A673 (cell line): ENCODE measurements at regions of chr1 and their contacts with region 1.

Region 1: GRCh38 chr1:220776720-220777326 is 9.9 kb upstream of the MTARC1 start:
- DNase-seq: peak; percentile 78
- H3K4me3 ChIP-seq: no peak overlapping the region
- H3K27ac ChIP-seq: no peak overlapping the region
- H3K4me1 ChIP-seq: no peaks in the 10 kb centered on the region
- H3K27me3 ChIP-seq: no peaks in the 10 kb centered on the region
- CTCF ChIP-seq: peak; percentile 97

Region 2: DNA sequence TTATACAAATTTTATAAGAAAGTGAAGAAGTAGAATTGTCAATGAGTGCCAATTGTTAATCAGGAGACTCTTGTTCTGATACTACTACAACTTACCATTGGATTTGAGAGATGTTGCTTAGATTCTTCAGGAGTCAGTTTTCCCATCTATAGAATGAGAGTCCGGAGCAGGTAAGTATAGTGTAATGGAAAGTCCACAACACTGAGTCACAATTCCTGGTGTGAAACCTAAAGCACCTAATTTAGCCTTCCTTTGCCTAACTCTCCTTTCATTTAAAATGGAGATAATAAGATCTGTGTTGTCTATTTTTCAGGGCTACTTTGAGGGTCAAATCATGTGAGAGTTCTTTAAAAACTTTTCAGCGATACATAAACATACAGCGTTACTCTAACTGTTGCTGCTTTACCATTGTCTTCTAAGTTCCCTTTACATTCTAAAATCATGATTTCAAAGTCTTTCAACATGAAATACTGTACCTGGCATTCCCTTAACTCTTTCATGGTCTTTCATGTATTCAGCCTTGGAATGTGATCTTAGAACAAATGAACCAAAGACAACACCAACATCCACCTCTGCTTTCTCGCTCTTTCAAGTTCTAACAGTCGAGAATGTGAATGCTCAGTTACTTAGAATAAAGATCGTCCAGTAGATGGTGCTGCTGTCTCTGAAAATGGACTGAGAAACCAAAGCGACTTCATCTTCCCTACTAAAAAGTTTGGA is 939.4 kb before region 1 on chr1:
- CTCF ChIA-PET with region 1: no interaction called
- POLR2A ChIA-PET with region 1: no interaction called
- intact Hi-C with region 1: loop called (anchors 5 kb)
- DNase-seq: peak; percentile 65
- H3K4me3 ChIP-seq: no peak overlapping the region
- H3K27ac ChIP-seq: no peak overlapping the region
- H3K4me1 ChIP-seq: no peaks in the 10 kb centered on the region
- H3K27me3 ChIP-seq: peaks cover 17% of the 10 kb centered on the region
- CTCF ChIP-seq: peak; percentile 72

Region 3: DNA sequence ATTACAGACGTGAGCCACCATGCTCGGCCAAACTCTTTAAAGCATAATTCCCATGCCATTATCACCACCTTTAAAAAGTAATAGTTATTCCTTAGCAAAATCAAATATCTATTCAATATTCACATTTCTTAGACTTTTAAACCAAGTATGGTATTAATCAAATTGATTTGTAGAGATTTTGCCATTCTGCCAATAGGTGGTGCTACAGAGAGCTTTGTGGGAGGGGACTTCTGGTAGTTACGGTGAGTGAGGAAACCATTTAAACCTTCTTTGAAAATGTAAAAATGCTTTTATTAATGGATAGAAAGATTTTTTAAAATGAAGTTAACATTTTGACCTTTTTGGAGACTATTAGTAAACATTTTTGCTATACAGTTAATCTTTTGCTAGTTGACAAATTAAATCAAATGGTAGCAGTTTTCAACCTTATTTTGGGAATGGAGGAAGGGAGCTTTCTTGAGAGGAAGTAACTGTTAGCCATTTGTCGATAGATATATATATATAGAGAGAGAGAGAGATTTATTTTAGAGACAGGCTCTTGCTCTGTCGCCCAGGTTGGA is 663.6 kb before region 1 on chr1:
- CTCF ChIA-PET with region 1: interaction called, 3 read pairs
- POLR2A ChIA-PET with region 1: no interaction called
- intact Hi-C with region 1: loop called (anchors 10 kb)
- DNase-seq: peak; percentile 73
- H3K4me3 ChIP-seq: no peak overlapping the region
- H3K27ac ChIP-seq: no peak overlapping the region
- H3K4me1 ChIP-seq: no peaks in the 10 kb centered on the region
- H3K27me3 ChIP-seq: no peaks in the 10 kb centered on the region
- CTCF ChIP-seq: peak; percentile 86

Region 4: GRCh38 chr1:220217383-220217988 is 559.3 kb before region 1 on chr1:
- CTCF ChIA-PET with region 1: interaction called, 4 read pairs
- POLR2A ChIA-PET with region 1: no interaction called
- intact Hi-C with region 1: loop called (anchors 5 kb)
- DNase-seq: peak; percentile 18
- H3K4me3 ChIP-seq: no peak overlapping the region
- H3K27ac ChIP-seq: no peak overlapping the region
- H3K4me1 ChIP-seq: no peaks in the 10 kb centered on the region
- H3K27me3 ChIP-seq: no peaks in the 10 kb centered on the region
- CTCF ChIP-seq: peak; percentile 61

Region 5: DNA sequence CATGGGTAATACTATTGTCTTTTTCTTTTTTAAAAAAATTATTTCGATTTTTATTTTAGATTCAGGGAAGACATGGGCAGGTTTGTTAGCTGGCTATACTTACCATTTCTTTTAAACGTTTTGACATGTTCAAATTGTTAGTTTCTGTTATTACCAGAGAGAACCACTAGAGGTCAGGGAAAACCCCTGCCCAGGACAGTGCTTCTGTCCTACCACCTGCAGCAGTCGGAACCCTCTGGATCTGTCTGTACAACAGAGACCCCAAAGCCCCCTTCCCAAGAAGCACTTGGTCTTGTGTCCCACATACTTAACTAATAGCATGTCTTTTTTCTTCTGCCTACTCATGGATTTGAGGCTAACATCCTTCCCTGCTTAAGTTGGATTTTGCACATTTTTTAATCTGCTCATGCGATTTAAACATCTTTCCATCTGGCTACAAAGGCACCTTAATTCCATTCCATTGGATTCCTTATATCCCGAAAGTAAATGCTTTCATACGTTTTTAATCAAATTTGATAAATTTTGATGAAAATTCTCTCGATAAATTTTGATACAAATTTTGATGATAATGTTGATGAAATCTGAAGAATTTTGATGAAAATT is 96.6 kb before region 1 on chr1:
- CTCF ChIA-PET with region 1: no interaction called
- POLR2A ChIA-PET with region 1: no interaction called
- intact Hi-C with region 1: loop called (anchors 2 kb)
- DNase-seq: peak; percentile 42
- H3K4me3 ChIP-seq: no peak overlapping the region
- H3K27ac ChIP-seq: no peak overlapping the region
- H3K4me1 ChIP-seq: no peaks in the 10 kb centered on the region
- H3K27me3 ChIP-seq: no peaks in the 10 kb centered on the region
- CTCF ChIP-seq: peak; percentile 70

Region 6: GRCh38 chr1:220791976-220792375 is 15.2 kb after region 1 on chr1:
- CTCF ChIA-PET with region 1: no interaction called
- POLR2A ChIA-PET with region 1: no interaction called
- intact Hi-C with region 1: no loop called
- DNase-seq: no peak
- H3K4me3 ChIP-seq: no peak overlapping the region
- H3K27ac ChIP-seq: no peak overlapping the region
- H3K4me1 ChIP-seq: no peaks in the 10 kb centered on the region
- H3K27me3 ChIP-seq: peaks cover 5% of the 10 kb centered on the region
- CTCF ChIP-seq: no peak

Region 7: GRCh38 chr1:220999872-221000863 is 223.3 kb after region 1 on chr1:
- CTCF ChIA-PET with region 1: no interaction called
- POLR2A ChIA-PET with region 1: no interaction called
- intact Hi-C with region 1: no loop called
- DNase-seq: no peak
- H3K4me3 ChIP-seq: no peak overlapping the region
- H3K27ac ChIP-seq: no peak overlapping the region
- H3K4me1 ChIP-seq: no peaks in the 10 kb centered on the region
- H3K27me3 ChIP-seq: no peaks in the 10 kb centered on the region
- CTCF ChIP-seq: no peak